ENCODE measurements at regions of chr7 and their contacts with region 1.

Region 1: DNA sequence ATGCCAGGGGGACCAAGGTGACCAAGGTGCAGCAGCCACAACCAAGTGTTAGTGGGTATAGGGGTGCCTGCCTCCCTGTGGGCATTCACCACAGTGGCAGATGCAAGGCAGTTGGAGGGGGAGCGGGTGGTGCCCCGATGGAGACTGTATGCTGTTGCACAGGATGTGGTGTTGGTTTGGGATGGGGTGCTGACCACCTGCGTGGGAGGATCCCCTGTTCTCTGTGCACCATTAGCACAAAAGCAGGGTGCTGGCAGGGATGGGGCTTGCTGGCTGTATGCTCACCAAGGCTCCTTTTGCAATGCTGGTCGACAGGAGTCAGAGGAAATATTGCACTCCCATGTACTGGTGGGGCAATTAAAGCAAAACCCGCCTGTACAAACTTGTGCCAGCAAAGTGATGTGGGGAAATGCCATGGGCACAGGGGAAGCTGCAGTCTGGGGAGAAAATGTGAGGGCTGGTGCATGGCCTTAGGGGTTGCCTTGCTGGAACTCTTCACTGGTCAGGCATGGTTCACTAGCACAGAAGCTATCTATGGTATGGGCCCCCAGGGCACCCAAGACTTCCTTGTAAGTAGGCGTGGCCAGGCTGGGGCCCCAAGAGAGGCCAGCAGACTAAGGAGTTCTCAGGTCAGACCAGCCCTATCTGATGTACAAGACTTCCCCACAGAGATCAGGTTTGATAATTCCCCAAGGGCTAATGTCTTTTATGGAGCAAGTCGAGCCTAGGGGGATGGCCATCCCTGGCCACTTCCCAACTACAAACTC is 51.9 kb upstream of the GNAT3 start:
- DNase-seq: no peak
- ATAC-seq: no peak
- H3K4me3 ChIP-seq: no peak overlapping the region
- H3K27ac ChIP-seq: no peak overlapping the region
- H3K4me1 ChIP-seq: no peaks in the 10 kb centered on the region
- H3K27me3 ChIP-seq: no peaks in the 10 kb centered on the region
- CTCF ChIP-seq: no peak
- POLR2A ChIP-seq: no peak

Region 2: DNA sequence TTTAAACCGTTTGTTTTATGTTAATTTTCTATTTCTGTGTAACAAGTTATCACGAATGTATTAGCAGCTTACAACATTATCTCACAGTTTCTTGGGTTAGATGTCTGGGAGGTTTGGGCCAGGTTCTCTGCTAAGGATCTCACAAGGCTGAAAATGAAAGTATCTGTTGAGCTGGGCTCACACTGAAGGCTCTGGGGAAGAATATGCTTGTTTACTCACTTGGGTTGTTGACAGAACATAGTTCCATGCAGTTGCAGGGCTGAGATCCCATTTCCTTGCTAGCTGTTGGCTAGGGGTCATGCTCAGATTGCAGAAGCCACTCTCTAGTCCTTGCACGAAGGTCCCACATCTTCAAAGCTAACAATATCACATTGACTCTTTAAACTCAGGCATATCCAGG is 695.7 kb before region 1 on chr7:
- in situ Hi-C with region 1: no loop called
- intact Hi-C with region 1: no loop called
- DNase-seq: no peak
- ATAC-seq: peak in 1 of 2 donors; percentile 16
- H3K4me3 ChIP-seq: no peak overlapping the region
- H3K27ac ChIP-seq: no peak overlapping the region
- H3K4me1 ChIP-seq: no peaks in the 10 kb centered on the region
- H3K27me3 ChIP-seq: no peaks in the 10 kb centered on the region
- CTCF ChIP-seq: no peak
- POLR2A ChIP-seq: no peak

Region 3: DNA sequence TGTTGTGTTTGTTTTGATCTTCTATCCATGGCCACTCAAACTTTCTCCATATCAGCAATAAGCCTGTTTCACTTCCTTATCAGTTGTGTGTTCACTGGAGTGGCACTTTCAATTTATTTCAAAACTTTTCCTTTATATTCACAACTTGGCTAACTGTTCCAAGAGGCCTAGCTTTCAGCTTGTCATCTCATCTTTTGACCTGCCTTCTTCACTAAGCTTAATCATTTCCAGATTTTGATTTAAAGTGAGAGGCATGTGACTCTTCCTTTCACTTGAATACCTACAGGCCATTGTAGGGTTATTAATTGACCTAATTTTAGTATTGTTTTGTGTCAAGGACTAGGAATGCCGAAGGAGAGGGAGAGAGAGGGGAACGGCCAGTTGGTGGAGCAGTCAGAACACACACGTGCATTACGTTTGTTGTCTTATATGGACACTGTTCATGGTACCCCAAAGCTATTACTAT is 46.4 kb before region 1 on chr7:
- in situ Hi-C with region 1: loop called in 1 of 4 experiments (anchors 10 kb)
- intact Hi-C with region 1: no loop called
- DNase-seq: no peak
- ATAC-seq: no peak
- H3K4me3 ChIP-seq: no peak overlapping the region
- H3K27ac ChIP-seq: peak overlapping the region in 2 of 4 donors; percentile 25 to 34
- H3K4me1 ChIP-seq: peaks cover 0 to 12% of the 10 kb centered on the region in 2 donors
- H3K27me3 ChIP-seq: no peaks in the 10 kb centered on the region
- CTCF ChIP-seq: no peak
- POLR2A ChIP-seq: no peak

Measured in gastrocnemius medialis (tissue), 4 donors.